Activated naive CD8-positive, alpha-beta T cell treated with anti-CD3 and anti-CD28 coated beads, Interleukin-2, amount 10 ng/mL, durations not matched to agents 7 days and 5 days (primary cell): ENCODE measurements at regions of chr4 and their contacts with region 1.

Region 1: DNA sequence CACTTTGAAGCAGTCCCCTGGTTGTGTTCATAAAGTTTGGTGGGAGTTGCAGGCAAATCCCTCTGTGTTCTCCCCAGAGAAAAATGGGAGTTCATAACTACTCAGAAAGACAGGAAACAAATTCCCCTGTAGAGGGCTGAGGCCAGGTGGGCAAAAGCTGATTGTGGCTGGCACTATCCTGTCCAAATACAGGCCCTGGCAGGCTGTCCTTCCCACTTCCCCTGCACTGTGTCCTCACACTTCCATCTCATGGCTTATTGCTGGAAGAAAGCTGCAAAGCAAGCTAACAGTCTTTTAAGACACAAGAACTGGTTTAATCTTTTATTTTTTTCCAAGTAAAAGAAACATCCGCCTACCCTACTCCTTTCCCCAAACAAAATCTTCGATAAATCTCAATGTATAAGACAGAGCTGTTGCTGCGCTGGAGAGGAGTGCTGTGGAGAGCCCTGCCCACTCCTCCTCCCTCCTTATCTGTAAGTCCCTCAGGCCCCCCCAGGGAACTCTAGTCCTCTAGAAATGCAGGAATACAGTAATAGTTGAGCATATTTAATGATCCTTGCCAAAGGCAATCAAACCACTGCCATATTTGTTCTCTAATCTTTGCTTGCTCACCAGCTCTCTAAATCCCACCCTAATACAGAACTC is 14.0 kb downstream of the TAPT1 start:
- DNase-seq: no peak
- ATAC-seq: no peak
- H3K4me3 Mint-ChIP-seq: no peak overlapping the region
- H3K27ac Mint-ChIP-seq: no peak overlapping the region
- H3K4me1 Mint-ChIP-seq: peaks cover 49% of the 10 kb centered on the region
- H3K27me3 Mint-ChIP-seq: no peaks in the 10 kb centered on the region

Region 2: DNA sequence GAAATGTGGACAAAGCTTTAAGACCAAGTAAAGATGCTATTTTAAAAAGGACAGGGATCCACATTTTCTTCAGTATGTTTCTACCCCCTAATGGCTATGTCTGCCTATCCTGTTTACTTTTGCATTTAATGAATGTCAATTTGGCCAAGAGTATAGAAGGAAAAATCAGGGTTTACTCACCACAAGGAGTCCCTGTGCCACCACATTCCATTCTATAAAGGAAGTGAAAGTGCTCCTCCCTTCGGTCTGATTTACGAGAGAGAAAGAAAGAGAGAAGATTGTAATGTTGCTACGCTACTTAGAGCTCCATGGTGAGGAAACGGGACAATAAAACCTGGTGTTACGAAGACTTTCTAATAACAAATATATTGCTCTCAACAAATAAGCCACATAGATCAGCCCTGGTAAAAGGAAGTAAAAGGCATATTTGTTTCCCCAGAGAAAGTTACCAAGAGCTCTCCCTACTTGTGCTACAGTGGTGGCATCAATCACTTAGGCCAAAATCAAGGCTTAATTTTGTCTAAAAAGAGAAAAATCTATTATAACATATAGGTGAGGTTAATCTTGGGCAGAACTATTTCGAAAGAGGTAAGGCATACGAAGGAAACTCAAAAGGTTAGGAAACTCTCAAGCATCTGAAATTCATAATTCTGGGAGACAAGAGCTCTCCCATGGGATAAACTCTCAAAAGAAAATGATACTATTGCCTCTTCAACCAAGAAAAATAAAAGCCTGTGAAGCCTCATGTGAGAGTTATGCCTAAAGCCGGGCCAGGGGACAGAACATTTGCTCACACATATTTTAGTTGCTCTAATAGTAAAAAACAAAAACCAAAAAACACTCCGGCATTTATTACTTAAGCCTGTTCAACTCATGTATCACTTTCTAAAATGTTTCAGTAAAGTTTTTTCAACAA is 15.5 kb before region 1 on chr4:
- POLR2A ChIA-PET with region 1: no interaction called
- DNase-seq: no peak
- ATAC-seq: no peak
- H3K4me3 Mint-ChIP-seq: peak overlapping the region; percentile 38
- H3K27ac Mint-ChIP-seq: no peak overlapping the region
- H3K4me1 Mint-ChIP-seq: peaks cover 12% of the 10 kb centered on the region
- H3K27me3 Mint-ChIP-seq: no peaks in the 10 kb centered on the region

Region 3: GRCh38 chr4:16225863-16226815 is 13.9 kb after region 1 on chr4 and contains the start of gene TAPT1:
- POLR2A ChIA-PET with region 1: interaction called, 19 read pairs
- DNase-seq: peak; percentile 86
- ATAC-seq: peak; percentile 71
- H3K4me3 Mint-ChIP-seq: peak within 1 kb of the TSS; percentile 91
- H3K27ac Mint-ChIP-seq: peak within 1 kb of the TSS; percentile 95
- H3K4me1 Mint-ChIP-seq: peaks cover 39% of the 10 kb centered on the region
- H3K27me3 Mint-ChIP-seq: no peaks in the 10 kb centered on the region
- total RNA-seq, gene TAPT1: 46.1 TPM

Region 4: DNA sequence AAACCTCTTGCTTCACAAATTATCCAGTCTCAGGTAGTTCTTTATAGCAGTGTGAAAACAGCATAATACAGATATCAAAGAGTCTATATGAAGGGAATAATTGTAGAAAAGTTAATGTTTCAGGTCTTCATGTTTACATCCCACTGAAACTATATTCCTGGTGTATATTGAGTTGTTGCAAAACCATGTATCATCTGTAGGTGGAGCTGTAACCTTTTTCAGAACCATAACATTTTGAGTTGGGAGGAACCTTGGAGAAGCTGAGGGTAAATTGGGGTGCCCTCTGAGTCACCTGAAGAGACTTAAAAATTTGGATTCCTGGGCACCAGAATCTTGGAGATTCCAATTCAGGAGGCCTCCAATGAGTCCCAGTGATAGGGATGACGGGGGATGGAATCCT is 65.9 kb after region 1 on chr4:
- POLR2A ChIA-PET with region 1: no interaction called
- DNase-seq: no peak
- ATAC-seq: no peak
- H3K4me3 Mint-ChIP-seq: no peak overlapping the region
- H3K27ac Mint-ChIP-seq: no peak overlapping the region
- H3K4me1 Mint-ChIP-seq: no peaks in the 10 kb centered on the region
- H3K27me3 Mint-ChIP-seq: peaks cover 2% of the 10 kb centered on the region